ENCODE measurements at regions of chr2 and their contacts with region 1.

Region 1: GRCh38 chr2:64036034-64036705 is 16.9 kb upstream of the VPS54 start:
- DNase-seq: peak; percentile 47
- ATAC-seq: peak; percentile 93
- H3K4me3 Mint-ChIP-seq: peak overlapping the region; percentile 47
- H3K27ac Mint-ChIP-seq: peak overlapping the region; percentile 84
- H3K4me1 Mint-ChIP-seq: peaks cover 44% of the 10 kb centered on the region
- H3K27me3 Mint-ChIP-seq: no peaks in the 10 kb centered on the region
- CTCF ChIP-seq: no peak

Region 2: GRCh38 chr2:64021641-64022042 is 14.5 kb before region 1 on chr2:
- CTCF ChIA-PET with region 1: interaction called, 12 read pairs
- POLR2A ChIA-PET with region 1: interaction called, 3 read pairs
- intact Hi-C with region 1: no loop called
- DNase-seq: no peak
- ATAC-seq: no peak
- H3K4me3 Mint-ChIP-seq: peak overlapping the region; percentile 33
- H3K27ac Mint-ChIP-seq: peak overlapping the region; percentile 77
- H3K4me1 Mint-ChIP-seq: peaks cover 36% of the 10 kb centered on the region
- H3K27me3 Mint-ChIP-seq: no peaks in the 10 kb centered on the region
- CTCF ChIP-seq: no peak

Region 3: GRCh38 chr2:64067326-64067725 is 31.2 kb after region 1 on chr2:
- CTCF ChIA-PET with region 1: no interaction called
- POLR2A ChIA-PET with region 1: no interaction called
- intact Hi-C with region 1: no loop called
- DNase-seq: no peak
- ATAC-seq: no peak
- H3K4me3 Mint-ChIP-seq: no peak overlapping the region
- H3K27ac Mint-ChIP-seq: no peak overlapping the region
- H3K4me1 Mint-ChIP-seq: peaks cover 30% of the 10 kb centered on the region
- H3K27me3 Mint-ChIP-seq: no peaks in the 10 kb centered on the region
- CTCF ChIP-seq: no peak

Region 4: DNA sequence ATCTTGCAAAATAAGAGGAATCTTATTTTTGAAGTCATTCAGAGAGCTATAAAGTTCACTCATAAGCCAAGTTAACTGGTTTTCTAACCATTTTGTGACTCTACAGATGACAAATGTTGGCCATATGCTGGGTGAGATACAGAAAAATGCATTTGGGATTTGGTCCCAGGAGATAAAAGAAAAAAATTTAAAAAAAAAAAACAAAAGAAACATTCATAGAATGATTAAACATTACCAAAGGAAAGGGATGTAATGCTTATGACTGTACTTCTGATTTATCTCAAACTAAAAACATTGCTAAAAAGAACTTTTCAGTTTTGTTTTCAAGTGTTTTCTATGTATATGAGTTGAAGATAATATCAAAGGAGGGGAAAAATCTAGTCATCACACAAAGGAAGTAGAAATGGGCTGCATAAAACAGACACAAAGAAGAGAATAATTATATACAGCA is 65.0 kb after region 1 on chr2:
- CTCF ChIA-PET with region 1: no interaction called
- POLR2A ChIA-PET with region 1: no interaction called
- intact Hi-C with region 1: loop called (anchors 5 kb)
- DNase-seq: no peak
- ATAC-seq: peak; percentile 80
- H3K4me3 Mint-ChIP-seq: peak overlapping the region; percentile 42
- H3K27ac Mint-ChIP-seq: peak overlapping the region; percentile 86
- H3K4me1 Mint-ChIP-seq: peaks cover 56% of the 10 kb centered on the region
- H3K27me3 Mint-ChIP-seq: no peaks in the 10 kb centered on the region
- CTCF ChIP-seq: no peak

Measured in activated CD8-positive, alpha-beta T cell treated with anti-CD3 and anti-CD28 coated beads for 36 hours (primary cell).